Natural killer cell (primary cell): ENCODE measurements at regions of chr1 and their contacts with region 1.

Region 1: DNA sequence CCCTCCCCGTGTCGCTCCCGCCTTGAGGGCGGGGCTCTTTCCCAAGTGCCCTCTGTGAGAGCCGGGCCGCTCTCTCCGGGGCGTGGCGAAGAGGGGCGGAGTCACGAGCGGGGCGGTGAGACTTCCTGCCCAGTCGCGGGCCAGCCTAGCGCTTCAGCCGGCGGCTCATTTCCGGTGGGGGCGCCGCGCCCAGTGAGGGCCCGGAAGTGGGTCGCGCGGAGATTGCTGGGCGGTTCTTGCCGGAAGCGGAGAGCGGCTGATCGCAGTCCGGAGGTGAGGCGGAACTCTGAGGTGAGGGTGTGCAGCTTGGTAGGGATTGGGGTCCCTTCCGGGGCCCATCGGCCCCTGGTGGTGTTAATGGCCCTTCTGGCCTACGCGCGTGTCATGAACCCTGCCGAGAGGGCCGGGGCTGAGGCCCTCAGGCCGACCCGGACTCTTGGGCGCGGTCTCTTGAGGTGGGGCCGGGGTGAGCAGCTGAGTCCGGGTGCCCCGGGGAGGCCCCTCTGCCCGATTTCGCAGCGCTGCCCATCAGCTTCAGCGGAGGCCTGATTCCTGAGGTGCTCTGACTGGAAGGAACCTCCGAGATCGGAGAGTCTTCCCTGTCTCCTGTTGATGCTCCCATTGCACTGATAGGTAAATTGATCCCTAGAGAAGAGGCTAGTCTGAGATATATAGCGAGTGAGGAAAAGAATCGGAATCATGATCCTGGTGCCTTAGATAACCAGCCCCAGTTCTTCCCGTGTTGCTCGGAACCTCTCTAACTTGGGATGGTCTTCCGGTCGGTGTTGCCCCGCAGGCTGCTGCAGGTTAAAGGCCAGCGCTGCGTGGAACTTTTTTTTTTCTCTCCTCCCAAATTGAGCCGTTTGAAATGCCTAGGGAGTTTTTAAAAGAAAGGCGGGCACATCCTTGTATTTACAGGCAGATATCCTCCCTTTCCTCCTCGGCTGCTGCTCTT is at the start of gene CAP1:
- DNase-seq: peak; percentile 99 to 100
- ATAC-seq: peak; percentile 91 to 98 (median 91)
- H3K4me3 ChIP-seq: peak within 1 kb of the TSS; percentile 99
- H3K4me3 Mint-ChIP-seq: peak within 1 kb of the TSS; percentile 84
- H3K27ac ChIP-seq: peak within 1 kb of the TSS; percentile 98
- H3K27ac Mint-ChIP-seq: peak within 1 kb of the TSS; percentile 96 to 98
- H3K4me1 ChIP-seq: peaks cover 73% of the 10 kb centered on the region
- H3K4me1 Mint-ChIP-seq: peaks cover 69 to 77% of the 10 kb centered on the region in 2 donors
- H3K27me3 ChIP-seq: no peaks in the 10 kb centered on the region
- H3K27me3 Mint-ChIP-seq: no peaks in the 10 kb centered on the region
- CTCF ChIP-seq: no peak
- total RNA-seq, gene CAP1: 482 to 541 (median 537) TPM

Region 2: DNA sequence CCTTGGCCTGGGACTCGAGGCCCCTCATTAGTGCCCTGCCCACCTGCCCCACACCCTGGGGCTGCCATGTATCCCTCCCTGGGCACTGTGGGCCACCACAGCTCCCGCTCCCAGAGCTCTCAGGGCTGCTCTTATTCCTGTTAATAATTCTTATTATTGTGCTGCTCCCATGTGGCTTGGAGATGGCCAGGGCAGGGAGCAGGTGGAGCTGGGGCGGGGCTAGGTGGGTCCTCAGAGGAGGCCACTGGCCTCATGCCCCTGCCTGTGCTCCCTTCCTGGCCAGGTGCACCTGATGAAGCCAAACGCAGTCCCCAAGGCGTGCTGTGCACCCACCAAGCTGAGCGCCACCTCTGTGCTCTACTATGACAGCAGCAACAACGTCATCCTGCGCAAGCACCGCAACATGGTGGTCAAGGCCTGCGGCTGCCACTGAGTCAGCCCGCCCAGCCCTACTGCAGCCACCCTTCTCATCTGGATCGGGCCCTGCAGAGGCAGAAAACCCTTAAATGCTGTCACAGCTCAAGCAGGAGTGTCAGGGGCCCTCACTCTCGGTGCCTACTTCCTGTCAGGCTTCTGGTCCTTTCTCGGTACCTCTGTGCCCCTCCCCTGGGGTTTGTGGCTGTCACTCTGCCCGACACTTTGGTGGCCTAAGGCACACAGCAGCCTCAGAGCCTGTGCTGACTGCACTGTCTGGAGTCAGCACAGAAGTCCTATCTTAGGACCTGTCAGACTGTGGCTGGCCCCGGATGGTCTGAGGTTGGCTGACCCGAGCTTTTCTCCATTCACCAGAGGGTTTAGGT is 515.2 kb before region 1 on chr1:
- intact Hi-C with region 1: no loop called
- DNase-seq: peak; percentile 64 to 74
- ATAC-seq: peak; percentile 90 to 96 (median 92)
- H3K4me3 ChIP-seq: no peak overlapping the region
- H3K4me3 Mint-ChIP-seq: peak overlapping the region; percentile 43
- H3K27ac ChIP-seq: no peak overlapping the region
- H3K27ac Mint-ChIP-seq: peak overlapping the region; percentile 34 to 80
- H3K4me1 ChIP-seq: peaks cover 34% of the 10 kb centered on the region
- H3K4me1 Mint-ChIP-seq: peaks cover 8 to 24% of the 10 kb centered on the region in 2 donors
- H3K27me3 ChIP-seq: peaks cover 2% of the 10 kb centered on the region
- H3K27me3 Mint-ChIP-seq: peaks cover 0 to 3% of the 10 kb centered on the region in 2 donors
- CTCF ChIP-seq: no peak

Region 3: DNA sequence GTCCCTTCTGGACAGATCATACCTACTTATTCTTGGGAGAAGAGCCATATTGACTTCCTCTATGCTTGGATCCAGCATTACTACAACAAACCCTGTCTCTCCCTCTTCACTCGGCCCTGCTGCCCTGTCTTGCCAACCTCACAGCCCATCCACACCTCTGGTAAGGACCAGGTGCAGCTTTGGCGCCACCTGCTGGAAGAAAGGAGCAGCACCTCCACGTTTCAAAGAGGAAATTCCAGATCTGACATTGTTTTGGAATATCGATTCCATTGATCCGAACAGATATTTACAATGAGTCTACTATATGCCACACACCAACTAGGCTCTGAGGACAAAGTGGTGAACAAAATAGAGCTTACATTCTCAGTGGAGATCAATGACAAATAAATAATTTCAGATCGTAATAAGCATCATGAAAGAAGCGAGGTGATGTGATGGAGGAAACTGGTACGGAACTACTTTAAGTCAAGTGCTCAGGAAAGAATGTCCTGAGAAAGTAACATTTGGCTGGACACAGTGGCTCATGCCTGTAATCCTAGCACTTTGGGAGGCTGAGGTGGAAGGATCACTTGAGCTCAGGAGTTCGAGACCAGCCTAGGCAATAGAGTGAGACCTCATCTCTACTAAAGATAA is 67.2 kb before region 1 on chr1:
- intact Hi-C with region 1: loop called (anchors 10 kb)
- DNase-seq: peak; percentile 66 to 86
- ATAC-seq: peak; percentile 78 to 88 (median 88)
- H3K4me3 ChIP-seq: no peak overlapping the region
- H3K4me3 Mint-ChIP-seq: no peak overlapping the region
- H3K27ac ChIP-seq: no peak overlapping the region
- H3K27ac Mint-ChIP-seq: no peak overlapping the region
- H3K4me1 ChIP-seq: peaks cover 5% of the 10 kb centered on the region
- H3K4me1 Mint-ChIP-seq: peaks cover 7% of the 10 kb centered on the region in 2 donors
- H3K27me3 ChIP-seq: no peaks in the 10 kb centered on the region
- H3K27me3 Mint-ChIP-seq: no peaks in the 10 kb centered on the region
- CTCF ChIP-seq: peak; percentile 98

Region 4: GRCh38 chr1:40059338-40059959 is 18.7 kb after region 1 on chr1:
- intact Hi-C with region 1: loop called (anchors 2 kb)
- DNase-seq: peak in 1 of 2 donors; percentile 68
- ATAC-seq: peak; percentile 72 to 80 (median 80)
- H3K4me3 ChIP-seq: no peak overlapping the region
- H3K4me3 Mint-ChIP-seq: peak overlapping the region; percentile 85
- H3K27ac ChIP-seq: peak overlapping the region; percentile 55
- H3K27ac Mint-ChIP-seq: peak overlapping the region; percentile 77 to 95
- H3K4me1 ChIP-seq: peaks cover 71% of the 10 kb centered on the region
- H3K4me1 Mint-ChIP-seq: peaks cover 85 to 93% of the 10 kb centered on the region in 2 donors
- H3K27me3 ChIP-seq: no peaks in the 10 kb centered on the region
- H3K27me3 Mint-ChIP-seq: no peaks in the 10 kb centered on the region
- CTCF ChIP-seq: no peak